Posterior vena cava (tissue), 2 donors: ENCODE measurements at regions of chr3 and their contacts with region 1.

Region 1: DNA sequence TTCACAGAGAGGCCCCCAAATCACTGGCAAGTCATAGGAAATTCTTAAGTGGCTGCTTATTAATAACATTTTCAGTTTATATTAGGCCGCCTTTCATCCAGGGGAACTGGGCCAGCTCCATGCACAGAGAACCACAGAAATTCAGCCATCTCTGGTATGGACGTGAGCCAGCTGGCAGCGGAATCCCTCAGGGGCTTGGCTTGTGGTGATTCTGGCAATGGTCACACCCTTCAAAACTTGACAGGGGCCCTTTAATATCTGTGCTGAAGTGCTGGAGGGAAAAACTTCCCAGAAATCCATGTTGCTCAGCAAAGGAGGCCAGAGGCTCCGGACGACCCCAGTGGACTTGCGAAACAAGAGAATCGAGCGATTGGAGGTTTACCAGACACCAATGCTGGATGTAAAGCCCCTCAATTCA is 11.3 kb downstream of the PRICKLE2 start:
- DNase-seq: peak; percentile 92

Region 2: DNA sequence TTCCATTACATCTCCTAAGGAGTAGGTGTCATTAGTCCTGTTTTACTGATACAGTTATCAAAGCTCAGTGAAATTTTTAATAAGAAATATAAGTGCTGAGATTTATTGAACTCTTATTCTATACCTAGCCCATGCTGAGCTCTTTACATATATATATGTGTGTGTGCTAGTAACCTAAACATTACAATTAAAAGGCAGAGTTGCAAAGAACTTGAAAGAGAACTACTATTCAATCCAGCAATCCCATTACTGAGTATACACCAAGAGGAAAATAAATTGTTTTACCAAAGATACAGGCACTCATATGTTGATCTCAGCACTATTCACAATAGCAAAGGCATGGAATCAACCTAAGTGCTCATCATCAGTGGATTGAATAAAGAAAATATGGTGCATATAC is 513.5 kb before region 1 on chr3:
- intact Hi-C with region 1: no loop called
- DNase-seq: no peak

Region 3: GRCh38 chr3:64023187-64023848 is 190.7 kb before region 1 on chr3 and contains the start of gene PSMD6:
- intact Hi-C with region 1: loop called in 1 of 2 experiments (anchors 5 kb)
- DNase-seq: peak; percentile 97
- total RNA-seq, gene PSMD6: 53.3 to 62.7 TPM

Region 4: GRCh38 chr3:64238971-64239667 is 25.1 kb after region 1 on chr3:
- intact Hi-C with region 1: loop called in 1 of 2 experiments (anchors 1 kb)
- DNase-seq: peak; percentile 84

Region 5: GRCh38 chr3:64267721-64268604 is 54.0 kb after region 1 on chr3:
- intact Hi-C with region 1: loop called in 1 of 2 experiments (anchors 10 kb)
- DNase-seq: peak; percentile 87